Ovary (tissue), 10 donors: ENCODE measurements at regions of chr15 and their contacts with region 1.

Region 1: GRCh38 chr15:100627789-100628395 is 25.5 kb downstream of the ASB7 start:
- DNase-seq: peak; percentile 32 to 78 (median 56)
- H3K4me3 ChIP-seq: no peak overlapping the region
- H3K27ac ChIP-seq: no peak overlapping the region
- H3K4me1 ChIP-seq: no peaks in the 10 kb centered on the region
- H3K27me3 ChIP-seq: no peaks in the 10 kb centered on the region
- CTCF ChIP-seq: peak; percentile 50 to 93 (median 86)
- EP300 ChIP-seq: no peak
- POLR2A ChIP-seq: no peak

Region 2: DNA sequence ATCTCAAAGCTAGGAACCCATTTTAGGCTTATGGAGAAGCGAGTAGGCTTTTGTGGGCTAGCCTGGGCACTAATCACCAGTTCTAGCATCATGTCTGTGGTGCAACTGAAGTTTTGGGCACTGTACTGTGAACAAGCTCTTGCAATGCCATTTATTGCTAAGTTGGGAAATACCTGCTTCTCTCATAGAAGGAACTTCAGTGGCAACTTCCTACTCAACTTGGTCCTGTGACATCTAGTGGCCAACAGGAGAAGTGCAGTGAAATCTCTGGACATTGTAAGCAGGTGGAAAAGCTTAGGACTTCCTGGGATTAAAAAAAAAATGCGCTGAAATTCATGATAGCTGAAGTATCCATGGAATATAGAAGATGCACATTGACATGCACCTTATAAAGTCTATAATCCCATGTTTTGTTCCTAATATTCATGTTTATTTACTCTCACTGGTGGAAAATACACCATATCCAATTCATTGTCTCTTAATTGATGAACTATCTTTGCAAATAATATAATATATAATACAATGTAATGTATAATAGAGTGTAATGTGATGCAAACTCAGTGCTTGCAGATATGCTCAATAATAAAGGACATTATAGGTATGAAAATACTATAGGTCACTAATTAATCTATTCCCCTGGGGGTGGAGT is 245.3 kb after region 1 on chr15:
- intact Hi-C with region 1: loop called (anchors 5 kb)
- DNase-seq: peak in 3 of 5 donors; percentile 46 to 80 (median 60)
- H3K4me3 ChIP-seq: no peak overlapping the region
- H3K27ac ChIP-seq: no peak overlapping the region
- H3K4me1 ChIP-seq: no peaks in the 10 kb centered on the region
- H3K27me3 ChIP-seq: no peaks in the 10 kb centered on the region
- CTCF ChIP-seq: peak; percentile 65 to 88 (median 86)
- EP300 ChIP-seq: no peak
- POLR2A ChIP-seq: no peak

Region 3: GRCh38 chr15:101008158-101009139 is 380.6 kb after region 1 on chr15:
- intact Hi-C with region 1: loop called (anchors 5 kb)
- DNase-seq: peak; percentile 72 to 90 (median 82)
- H3K4me3 ChIP-seq: peak overlapping the region; percentile 33
- H3K27ac ChIP-seq: no peak overlapping the region
- H3K4me1 ChIP-seq: peaks cover 2% of the 10 kb centered on the region
- H3K27me3 ChIP-seq: no peaks in the 10 kb centered on the region
- CTCF ChIP-seq: peak; percentile 80 to 95 (median 83)
- EP300 ChIP-seq: no peak
- POLR2A ChIP-seq: no peak

Region 4: GRCh38 chr15:101269479-101270223 is 641.8 kb after region 1 on chr15:
- intact Hi-C with region 1: loop called in 1 of 4 experiments (anchors 10 kb)
- DNase-seq: no peak
- H3K4me3 ChIP-seq: no peak overlapping the region
- H3K27ac ChIP-seq: no peak overlapping the region
- H3K4me1 ChIP-seq: peaks cover 4% of the 10 kb centered on the region
- H3K27me3 ChIP-seq: no peaks in the 10 kb centered on the region
- CTCF ChIP-seq: no peak
- EP300 ChIP-seq: no peak
- POLR2A ChIP-seq: no peak